Naive thymus-derived CD8-positive, alpha-beta T cell (primary cell): ENCODE measurements at regions of chr5 and their contacts with region 1.

Region 1: GRCh38 chr5:39194466-39195136 is 24.8 kb downstream of the FYB1 start:
- DNase-seq: no peak
- ATAC-seq: no peak
- H3K4me3 Mint-ChIP-seq: peak overlapping the region; percentile 77 to 99 (median 89)
- H3K27ac Mint-ChIP-seq: peak overlapping the region; percentile 87 to 98 (median 96)
- H3K4me1 Mint-ChIP-seq: peaks cover 36 to 76% (median 70%) of the 10 kb centered on the region in 4 donors
- H3K27me3 Mint-ChIP-seq: no peaks in the 10 kb centered on the region

Region 2: GRCh38 chr5:39080597-39081204 is 113.9 kb before region 1 on chr5:
- POLR2A ChIA-PET with region 1: no interaction called
- DNase-seq: peak in 2 of 10 donors; percentile 19 to 25
- ATAC-seq: no peak
- H3K4me3 Mint-ChIP-seq: no peak overlapping the region
- H3K27ac Mint-ChIP-seq: peak overlapping the region in 1 of 10 donors; percentile 59
- H3K4me1 Mint-ChIP-seq: peaks cover 0 to 18% (median 4%) of the 10 kb centered on the region in 4 donors
- H3K27me3 Mint-ChIP-seq: peaks cover 23 to 59% (median 30%) of the 10 kb centered on the region in 5 donors

Region 3: GRCh38 chr5:39209924-39210323 is 15.3 kb after region 1 on chr5:
- POLR2A ChIA-PET with region 1: interaction called, 88 read pairs
- DNase-seq: peak; percentile 44 to 89 (median 78)
- ATAC-seq: peak; percentile 77 to 83
- H3K4me3 Mint-ChIP-seq: peak overlapping the region; percentile 70 to 87 (median 82)
- H3K27ac Mint-ChIP-seq: peak overlapping the region; percentile 93 to 100 (median 96)
- H3K4me1 Mint-ChIP-seq: peaks cover 51 to 100% (median 95%) of the 10 kb centered on the region in 4 donors
- H3K27me3 Mint-ChIP-seq: no peaks in the 10 kb centered on the region